ENCODE measurements at regions of chrX and their contacts with region 1.

Region 1: DNA sequence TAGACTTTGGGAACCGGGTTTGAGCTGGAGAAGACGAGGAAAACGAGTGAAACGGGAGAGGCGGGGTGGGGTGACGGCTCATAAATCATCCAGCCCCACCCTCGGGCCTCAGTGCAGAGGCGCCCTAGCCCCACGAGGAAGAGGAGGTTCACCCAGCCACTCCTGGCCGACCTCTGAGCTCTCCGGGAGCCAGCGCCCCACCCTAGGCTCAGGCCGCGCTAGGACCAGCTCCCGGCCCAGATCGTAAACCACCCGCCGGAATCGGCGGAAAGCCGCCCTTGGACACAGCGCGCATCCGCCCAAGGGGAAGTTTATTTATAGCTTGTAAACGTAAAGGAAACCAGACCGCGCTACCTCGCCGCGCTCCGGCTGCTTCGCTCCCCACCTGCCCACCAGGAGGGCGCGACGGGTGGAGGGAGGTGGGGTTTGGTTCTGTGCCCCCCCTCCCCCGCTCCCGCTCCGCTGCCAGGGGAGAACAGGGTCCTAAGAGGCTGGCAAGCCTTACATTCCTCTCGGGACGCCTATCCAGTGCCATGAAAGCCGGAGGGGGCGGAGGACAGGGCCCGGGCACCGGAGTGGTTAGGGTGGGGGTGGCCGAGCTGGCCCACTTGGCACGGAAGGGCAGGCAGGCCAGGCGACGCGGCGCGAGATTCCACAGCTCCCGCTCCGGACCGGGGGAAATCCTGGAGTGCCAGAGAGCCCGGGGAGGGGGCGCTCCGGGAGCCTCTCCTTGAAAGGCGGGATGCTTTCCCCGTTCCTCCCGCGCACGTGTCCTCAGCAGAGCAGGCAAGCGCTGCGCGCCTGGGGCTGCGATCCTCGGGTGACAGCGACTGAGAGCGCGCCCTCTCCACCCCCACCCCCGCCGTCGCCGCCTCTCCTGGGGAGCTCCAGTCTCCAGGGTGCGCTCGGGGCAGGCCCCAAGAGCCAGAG is 84.2 kb downstream of the BCOR start:
- DNase-seq: peak; percentile 79
- ATAC-seq: peak; percentile 69
- H3K4me3 ChIP-seq: peak overlapping the region; percentile 77
- H3K27ac ChIP-seq: peak overlapping the region; percentile 83
- H3K4me1 ChIP-seq: peaks cover 24% of the 10 kb centered on the region
- H3K27me3 ChIP-seq: no peaks in the 10 kb centered on the region
- CTCF ChIP-seq: no peak

Region 2: GRCh38 chrX:39808471-39808917 is 205.0 kb before region 1 on chrX:
- CTCF ChIA-PET with region 1: interaction called, 3 read pairs
- POLR2A ChIA-PET with region 1: interaction called, 10 read pairs
- intact Hi-C with region 1: loop called (anchors 10 kb)
- DNase-seq: peak; percentile 32
- ATAC-seq: no peak
- H3K4me3 ChIP-seq: no peak overlapping the region
- H3K27ac ChIP-seq: peak overlapping the region; percentile 48
- H3K4me1 ChIP-seq: peaks cover 24% of the 10 kb centered on the region
- H3K27me3 ChIP-seq: no peaks in the 10 kb centered on the region
- CTCF ChIP-seq: no peak

Region 3: GRCh38 chrX:39896951-39897740 is 116.4 kb before region 1 on chrX:
- CTCF ChIA-PET with region 1: no interaction called
- POLR2A ChIA-PET with region 1: interaction called, 3 read pairs
- intact Hi-C with region 1: loop called (anchors 2 kb)
- DNase-seq: peak; percentile 72
- ATAC-seq: peak; percentile 31
- H3K4me3 ChIP-seq: no peak overlapping the region; the same call in 1 of the 2 replicates
- H3K27ac ChIP-seq: peak overlapping the region; percentile 90
- H3K4me1 ChIP-seq: peaks cover 52% of the 10 kb centered on the region
- H3K27me3 ChIP-seq: no peaks in the 10 kb centered on the region
- CTCF ChIP-seq: no peak

Region 4: DNA sequence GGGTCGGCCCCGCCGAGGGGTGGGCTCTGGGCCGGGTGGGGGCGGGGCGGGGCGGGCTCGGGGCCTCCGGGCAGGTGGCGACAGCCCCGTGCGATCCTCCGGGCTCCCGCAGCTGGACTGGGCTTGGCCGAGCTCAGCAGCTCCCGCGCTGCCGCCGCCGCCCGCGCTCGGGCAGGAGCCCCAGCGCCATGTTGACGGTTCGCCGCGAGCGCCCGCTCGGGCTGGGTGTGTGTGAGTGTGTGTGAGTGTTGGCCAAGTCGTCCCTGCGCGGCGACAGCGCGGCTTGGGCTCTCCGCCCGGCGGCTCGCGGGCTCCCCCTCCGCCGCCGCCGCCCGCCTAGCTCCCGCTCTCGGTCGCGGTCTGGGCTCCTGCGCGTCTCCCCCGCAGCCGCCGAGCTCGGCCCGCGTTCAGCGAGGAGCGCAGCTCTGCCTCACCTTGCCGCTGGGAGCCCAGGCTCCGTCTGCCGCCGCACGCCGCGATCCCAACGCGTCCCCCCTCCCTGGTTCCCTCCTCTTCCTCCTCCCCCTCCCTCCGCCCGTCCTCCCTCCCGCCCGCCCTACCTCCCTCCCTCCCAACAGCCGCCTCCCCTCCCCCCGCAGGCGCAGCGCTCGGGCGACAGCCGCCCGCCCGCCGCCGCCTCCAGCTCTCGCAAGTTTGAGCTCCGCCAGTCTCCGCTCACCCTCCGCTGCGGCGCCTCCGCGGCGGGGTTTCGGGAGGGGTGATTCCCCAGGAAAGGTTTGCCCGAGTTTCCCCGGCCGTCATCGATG is 84.1 kb after region 1 on chrX and contains the start of gene BCOR:
- CTCF ChIA-PET with region 1: interaction called, 5 read pairs
- POLR2A ChIA-PET with region 1: interaction called, 13 read pairs
- intact Hi-C with region 1: loop called (anchors 5 kb)
- DNase-seq: peak; percentile 62
- ATAC-seq: peak; percentile 19
- H3K4me3 ChIP-seq: peak within 1 kb of the TSS; percentile 92
- H3K27ac ChIP-seq: no peak within 1 kb of the TSS
- H3K4me1 ChIP-seq: peaks cover 34% of the 10 kb centered on the region
- H3K27me3 ChIP-seq: no peaks in the 10 kb centered on the region
- CTCF ChIP-seq: no peak
- total RNA-seq, gene BCOR: 21.8 and 41.9 TPM in 2 replicates

Region 5: DNA sequence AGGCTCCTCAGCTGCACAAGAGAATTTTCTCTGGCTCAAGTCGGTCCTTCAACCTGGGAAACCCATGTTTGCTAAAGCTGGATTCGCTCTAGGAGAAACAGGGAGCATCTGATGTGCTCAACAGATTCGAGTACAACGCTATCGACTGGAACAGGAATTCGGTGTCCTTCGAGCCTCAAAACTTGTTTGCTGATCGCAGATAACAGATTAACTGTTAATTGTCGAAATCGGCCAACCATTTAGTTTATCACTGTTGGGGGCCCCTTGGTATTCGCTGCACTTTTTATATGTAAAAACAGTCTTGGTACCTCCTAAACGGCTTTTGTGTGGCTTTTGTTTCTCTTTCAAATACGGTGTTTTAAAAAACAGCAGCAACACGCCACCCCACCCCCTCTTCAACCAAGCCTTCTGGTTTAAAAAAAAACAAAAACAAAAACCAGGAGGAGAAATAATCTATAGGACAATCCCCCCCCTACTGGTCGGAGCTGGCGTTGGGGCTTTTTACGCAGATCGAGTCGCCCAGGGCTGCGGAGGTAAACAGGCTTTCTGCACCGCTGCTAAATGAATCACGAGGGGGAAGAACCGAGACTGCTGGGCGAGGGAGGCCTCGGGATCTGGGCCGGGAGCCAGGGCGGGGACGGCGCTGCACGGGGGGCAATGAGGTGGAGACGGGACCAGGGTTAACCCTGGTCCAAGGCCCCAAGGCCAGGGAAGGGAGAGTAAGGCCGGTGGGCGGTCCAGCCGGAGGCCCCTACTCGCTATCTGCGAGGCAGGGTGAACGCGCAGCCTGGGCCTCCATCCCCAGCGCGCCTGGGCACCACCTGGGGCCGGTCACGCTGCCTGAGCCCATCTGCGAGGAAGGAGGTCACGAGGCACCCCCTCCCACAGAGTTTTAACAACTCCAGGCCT is 155.9 kb after region 1 on chrX:
- CTCF ChIA-PET with region 1: no interaction called
- POLR2A ChIA-PET with region 1: interaction called, 4 read pairs
- intact Hi-C with region 1: loop called (anchors 2 kb)
- DNase-seq: peak; percentile 85
- ATAC-seq: peak; percentile 39
- H3K4me3 ChIP-seq: peak overlapping the region; percentile 63
- H3K27ac ChIP-seq: no peak overlapping the region
- H3K4me1 ChIP-seq: peaks cover 38% of the 10 kb centered on the region
- H3K27me3 ChIP-seq: no peaks in the 10 kb centered on the region
- CTCF ChIP-seq: peak; percentile 71

Measured in PC-3 (cell line).